GM10248 (cell line): ENCODE measurements at regions of chr4 and their contacts with region 1.

Region 1: GRCh38 chr4:37653601-37654000 is 32.6 kb downstream of the RELL1 start:
- DNase-seq: no peak
- CTCF ChIP-seq: no peak

Region 2: GRCh38 chr4:37641916-37642849 is 11.4 kb before region 1 on chr4:
- CTCF ChIA-PET with region 1: interaction called, 11 read pairs
- POLR2A ChIA-PET with region 1: no interaction called
- DNase-seq: no peak
- CTCF ChIP-seq: no peak

Region 3: GRCh38 chr4:37666625-37667071 is 13.0 kb after region 1 on chr4:
- CTCF ChIA-PET with region 1: interaction called, 14 read pairs
- POLR2A ChIA-PET with region 1: no interaction called
- DNase-seq: no peak
- CTCF ChIP-seq: no peak

Region 4: GRCh38 chr4:37847311-37847884 is 193.8 kb after region 1 on chr4:
- CTCF ChIA-PET with region 1: no interaction called
- POLR2A ChIA-PET with region 1: no interaction called
- DNase-seq: no peak
- CTCF ChIP-seq: no peak